IMR-90 (cell line): ENCODE measurements at regions of chr2 and their contacts with region 1.

Region 1: DNA sequence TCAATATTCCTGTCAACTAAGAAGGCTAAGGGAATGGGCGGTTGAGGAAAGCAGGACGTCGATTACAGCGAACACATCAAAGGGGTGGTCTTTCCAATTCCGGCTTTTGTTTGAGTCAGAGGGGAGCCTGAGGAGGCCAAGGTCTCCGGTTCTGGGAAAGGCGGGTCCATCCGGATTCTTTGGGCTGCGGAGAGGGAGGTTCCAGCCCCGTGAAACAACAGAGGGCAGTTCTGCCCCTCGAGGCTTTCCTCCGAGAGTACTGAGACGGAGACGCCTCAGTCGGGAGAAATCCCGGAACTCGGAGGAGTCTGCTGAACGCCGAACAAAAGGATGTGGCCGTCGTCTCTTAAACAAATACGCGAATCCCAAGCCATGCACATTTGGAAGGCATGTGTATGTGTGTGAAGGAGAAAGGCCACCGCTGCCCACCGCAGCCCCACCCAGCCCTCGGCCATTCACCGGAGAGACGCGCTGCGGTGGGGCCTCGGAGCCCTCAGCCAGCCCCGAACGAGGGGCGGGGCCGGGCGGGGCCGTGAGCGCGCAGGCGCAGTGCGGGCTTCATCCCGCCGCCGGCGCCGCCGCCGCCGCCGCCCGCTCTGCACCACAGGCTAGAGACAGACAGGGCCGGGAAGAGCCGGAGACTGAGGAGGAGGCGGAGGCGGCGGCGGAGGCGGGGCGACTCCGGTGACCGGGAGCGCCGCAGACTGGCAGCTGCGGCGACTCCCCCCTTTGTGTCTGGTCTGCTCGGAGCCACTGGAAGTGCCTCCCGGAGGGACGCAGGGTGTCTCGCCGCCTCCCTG is at the start of gene BMPR2:
- DNase-seq: peak; percentile 81
- ATAC-seq: peak; percentile 80
- H3K4me3 ChIP-seq: peak within 1 kb of the TSS; percentile 100
- H3K27ac ChIP-seq: peak within 1 kb of the TSS; percentile 95
- H3K4me1 ChIP-seq: no peaks in the 10 kb centered on the region
- H3K27me3 ChIP-seq: no peaks in the 10 kb centered on the region
- CTCF ChIP-seq: no peak
- POLR2A ChIP-seq: peak; percentile 94
- RAD21 ChIP-seq: no peak
- total RNA-seq, gene BMPR2: 30.1 and 34.7 TPM in 2 replicates

Region 2: GRCh38 chr2:201950606-201951005 is 425.2 kb before region 1 on chr2:
- CTCF ChIA-PET with region 1: no interaction called
- POLR2A ChIA-PET with region 1: no interaction called
- dilution Hi-C with region 1: no loop called
- in situ Hi-C with region 1: no loop called
- intact Hi-C with region 1: no loop called
- DNase-seq: peak; percentile 54
- ATAC-seq: no peak; the same call in 1 of the 2 replicates
- H3K4me3 ChIP-seq: no peak overlapping the region
- H3K27ac ChIP-seq: no peak overlapping the region
- H3K4me1 ChIP-seq: peaks cover 4% of the 10 kb centered on the region
- H3K27me3 ChIP-seq: peaks cover 3% of the 10 kb centered on the region; the same call in 1 of the 2 replicates
- CTCF ChIP-seq: no peak
- POLR2A ChIP-seq: no peak
- RAD21 ChIP-seq: no peak

Region 3: GRCh38 chr2:202278944-202279343 is 96.9 kb before region 1 on chr2:
- CTCF ChIA-PET with region 1: interaction called, 4 read pairs
- POLR2A ChIA-PET with region 1: interaction called, 8 read pairs
- dilution Hi-C with region 1: no loop called
- in situ Hi-C with region 1: no loop called
- intact Hi-C with region 1: loop called (anchors 2 kb)
- DNase-seq: peak; percentile 78
- ATAC-seq: peak; percentile 73
- H3K4me3 ChIP-seq: no peak overlapping the region
- H3K27ac ChIP-seq: no peak overlapping the region
- H3K4me1 ChIP-seq: peaks cover 4% of the 10 kb centered on the region
- H3K27me3 ChIP-seq: no peaks in the 10 kb centered on the region
- CTCF ChIP-seq: peak; percentile 67
- POLR2A ChIP-seq: no peak
- RAD21 ChIP-seq: peak; percentile 66

Region 4: DNA sequence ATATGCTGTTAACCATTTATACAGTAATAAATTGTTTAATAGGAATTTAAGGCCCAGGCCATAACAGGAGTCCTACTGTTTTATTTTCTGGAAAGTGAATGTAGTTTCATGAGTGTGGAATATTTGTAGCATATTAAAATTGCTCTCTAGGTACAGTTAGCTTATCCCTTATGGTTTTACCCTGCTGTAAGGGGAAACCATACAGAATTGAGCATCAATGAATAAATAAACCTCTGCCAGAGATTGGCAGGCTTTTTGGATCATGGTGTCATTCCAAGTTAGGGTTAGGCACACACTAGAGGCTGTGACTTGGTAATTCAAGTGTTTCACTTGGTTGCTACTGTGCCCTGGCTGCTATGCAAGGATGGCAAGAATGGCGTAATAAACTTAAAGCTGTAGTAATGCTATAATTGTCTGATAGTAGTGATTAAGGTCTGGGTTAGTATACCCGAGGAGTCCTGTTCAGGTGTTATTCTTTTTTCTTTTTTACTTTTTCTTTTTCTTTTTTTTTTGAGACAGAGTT is 30.7 kb after region 1 on chr2:
- CTCF ChIA-PET with region 1: no interaction called
- POLR2A ChIA-PET with region 1: no interaction called
- dilution Hi-C with region 1: no loop called
- in situ Hi-C with region 1: no loop called
- intact Hi-C with region 1: no loop called
- DNase-seq: no peak
- ATAC-seq: peak; percentile 44
- H3K4me3 ChIP-seq: no peak overlapping the region
- H3K27ac ChIP-seq: no peak overlapping the region
- H3K4me1 ChIP-seq: 0 out of 2 replicates have a peak, but pooled peaks cover 2% of the 10 kb centered on the region
- H3K27me3 ChIP-seq: no peaks in the 10 kb centered on the region
- CTCF ChIP-seq: no peak
- POLR2A ChIP-seq: no peak
- RAD21 ChIP-seq: no peak

Region 5: GRCh38 chr2:202429164-202429980 is 53.6 kb after region 1 on chr2:
- CTCF ChIA-PET with region 1: no interaction called
- POLR2A ChIA-PET with region 1: interaction called, 9 read pairs
- dilution Hi-C with region 1: no loop called
- in situ Hi-C with region 1: no loop called
- intact Hi-C with region 1: loop called (anchors 5 kb)
- DNase-seq: peak; percentile 93
- ATAC-seq: peak; percentile 87
- H3K4me3 ChIP-seq: no peak overlapping the region
- H3K27ac ChIP-seq: peak overlapping the region; percentile 99
- H3K4me1 ChIP-seq: peaks cover 13% of the 10 kb centered on the region
- H3K27me3 ChIP-seq: no peaks in the 10 kb centered on the region
- CTCF ChIP-seq: no peak
- POLR2A ChIP-seq: no peak
- RAD21 ChIP-seq: no peak

Region 6: DNA sequence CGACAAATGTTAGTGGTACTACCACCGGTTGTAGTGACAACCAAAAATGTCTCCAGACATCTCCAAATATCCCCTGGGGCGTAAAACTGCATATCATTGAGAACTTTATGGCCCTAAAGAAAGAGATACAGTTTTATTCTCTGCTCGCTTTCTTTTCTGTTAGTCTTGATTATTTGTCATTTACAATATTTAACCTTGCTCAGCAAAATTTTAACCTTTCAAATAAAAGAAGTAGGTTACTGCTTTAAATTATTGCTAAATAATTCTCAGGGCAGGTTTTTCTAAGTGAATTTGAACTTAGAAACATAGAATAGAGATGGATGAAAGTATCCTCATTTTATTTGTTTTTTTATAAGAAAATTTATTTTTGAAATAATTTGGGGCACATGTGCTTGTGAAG is 68.2 kb after region 1 on chr2:
- CTCF ChIA-PET with region 1: no interaction called
- POLR2A ChIA-PET with region 1: no interaction called
- dilution Hi-C with region 1: no loop called
- in situ Hi-C with region 1: no loop called
- intact Hi-C with region 1: no loop called
- DNase-seq: no peak
- ATAC-seq: no peak
- H3K4me3 ChIP-seq: no peak overlapping the region
- H3K27ac ChIP-seq: no peak overlapping the region
- H3K4me1 ChIP-seq: peaks cover 2% of the 10 kb centered on the region; the same call in 1 of the 2 replicates
- H3K27me3 ChIP-seq: no peaks in the 10 kb centered on the region
- CTCF ChIP-seq: no peak
- POLR2A ChIP-seq: no peak
- RAD21 ChIP-seq: no peak

Region 7: DNA sequence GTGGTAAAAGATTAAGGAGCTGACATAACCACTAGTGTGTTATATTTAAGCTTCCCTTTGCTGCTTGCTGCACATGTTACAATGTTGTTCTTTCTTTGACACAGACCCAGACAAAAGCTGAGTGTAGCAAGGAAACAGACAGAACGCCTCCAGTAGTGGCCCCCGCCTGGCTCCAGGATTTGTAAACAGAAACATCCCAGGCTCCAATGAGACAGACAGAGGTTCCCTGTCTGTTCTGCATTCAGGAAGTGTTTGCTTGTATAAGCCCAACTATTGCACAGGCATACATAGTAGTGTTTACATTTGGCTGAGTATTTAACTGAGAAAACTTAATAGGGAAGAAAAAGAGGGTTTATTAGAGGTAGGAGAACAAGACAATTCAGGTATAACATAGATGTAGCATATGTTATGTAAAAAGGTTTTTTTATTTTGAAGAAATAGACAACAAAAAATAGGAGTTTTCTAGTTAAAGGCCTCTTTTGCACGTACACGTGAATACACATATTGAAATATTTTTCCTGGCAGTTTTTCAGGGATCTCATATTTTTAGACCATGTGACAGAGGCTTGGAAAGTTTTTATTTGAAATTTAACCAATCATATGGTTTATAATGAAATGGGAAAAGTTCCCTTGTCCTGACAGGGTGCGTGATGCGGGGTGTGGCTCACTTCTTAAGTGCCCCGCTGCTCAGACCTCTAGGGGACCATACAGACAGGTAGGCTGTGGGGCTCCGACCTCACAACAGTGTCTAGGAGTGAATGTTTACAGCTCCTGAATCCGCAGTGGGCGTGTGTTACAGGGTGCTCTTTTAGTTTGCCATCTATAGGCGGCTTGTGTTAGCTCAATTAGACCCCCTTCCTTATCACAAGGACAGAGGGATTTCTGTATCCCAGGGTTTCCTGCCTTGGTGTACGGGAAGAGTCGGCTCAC is 118.8 kb after region 1 on chr2:
- CTCF ChIA-PET with region 1: no interaction called
- POLR2A ChIA-PET with region 1: no interaction called
- dilution Hi-C with region 1: no loop called
- in situ Hi-C with region 1: no loop called
- intact Hi-C with region 1: loop called (anchors 1 kb)
- DNase-seq: peak; percentile 96
- ATAC-seq: peak; percentile 97
- H3K4me3 ChIP-seq: no peak overlapping the region
- H3K27ac ChIP-seq: peak overlapping the region; percentile 66
- H3K4me1 ChIP-seq: peaks cover 2% of the 10 kb centered on the region; the same call in 1 of the 2 replicates
- H3K27me3 ChIP-seq: no peaks in the 10 kb centered on the region
- CTCF ChIP-seq: no peak
- POLR2A ChIP-seq: no peak
- RAD21 ChIP-seq: no peak

Region 8: DNA sequence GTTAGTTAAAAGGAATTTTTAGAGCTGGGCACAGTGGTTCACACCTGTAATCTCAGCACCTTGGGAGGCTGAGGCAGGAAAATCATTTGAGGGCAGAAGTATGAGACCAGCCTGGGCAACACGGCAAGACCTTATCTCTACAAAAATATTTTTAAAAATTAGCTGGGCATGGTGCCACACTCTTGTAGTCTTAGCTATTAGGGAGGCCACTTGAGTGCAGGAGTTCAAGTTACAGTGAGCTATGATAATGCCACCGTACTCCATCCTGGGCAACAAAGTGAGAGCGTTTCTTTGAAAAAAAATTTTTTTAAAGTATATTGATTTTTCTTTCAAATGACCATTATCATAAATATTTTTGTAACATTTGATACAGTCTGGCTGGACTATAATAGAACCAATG is 165.3 kb after region 1 on chr2:
- CTCF ChIA-PET with region 1: no interaction called
- POLR2A ChIA-PET with region 1: no interaction called
- dilution Hi-C with region 1: no loop called
- in situ Hi-C with region 1: no loop called
- intact Hi-C with region 1: loop called (anchors 10 kb)
- DNase-seq: no peak
- ATAC-seq: no peak; the same call in 1 of the 2 replicates
- H3K4me3 ChIP-seq: no peak overlapping the region
- H3K27ac ChIP-seq: no peak overlapping the region
- H3K4me1 ChIP-seq: no peaks in the 10 kb centered on the region
- H3K27me3 ChIP-seq: no peaks in the 10 kb centered on the region
- CTCF ChIP-seq: no peak
- POLR2A ChIP-seq: no peak
- RAD21 ChIP-seq: no peak